ENCODE measurements at regions of chr9 and their contacts with region 1.

Region 1: GRCh38 chr9:121322037-121322775 is 47.8 kb downstream of the STOM start:
- DNase-seq: no peak
- H3K4me3 ChIP-seq: no peak overlapping the region
- H3K4me3 Mint-ChIP-seq: peak overlapping the region in 1 of 8 donors; percentile 24
- H3K27ac ChIP-seq: no peak overlapping the region
- H3K27ac Mint-ChIP-seq: peak overlapping the region in 1 of 7 donors; percentile 47
- H3K4me1 ChIP-seq: peaks cover 24% of the 10 kb centered on the region
- H3K4me1 Mint-ChIP-seq: peaks cover 14 to 29% (median 20%) of the 10 kb centered on the region in 4 donors
- H3K27me3 ChIP-seq: no peaks in the 10 kb centered on the region
- H3K27me3 Mint-ChIP-seq: no peaks in the 10 kb centered on the region

Region 2: GRCh38 chr9:121133149-121133816 is 188.9 kb before region 1 on chr9:
- CTCF ChIA-PET with region 1: no interaction called
- POLR2A ChIA-PET with region 1: no interaction called
- intact Hi-C with region 1: no loop called
- DNase-seq: peak; percentile 76 to 91 (median 81)
- H3K4me3 ChIP-seq: peak overlapping the region; percentile 21 to 48
- H3K4me3 Mint-ChIP-seq: peak overlapping the region; percentile 68 to 91 (median 77)
- H3K27ac ChIP-seq: peak overlapping the region; percentile 44
- H3K27ac Mint-ChIP-seq: peak overlapping the region; percentile 77 to 96 (median 87)
- H3K4me1 ChIP-seq: peaks cover 45% of the 10 kb centered on the region
- H3K4me1 Mint-ChIP-seq: peaks cover 52 to 79% (median 65%) of the 10 kb centered on the region in 4 donors
- H3K27me3 ChIP-seq: no peaks in the 10 kb centered on the region
- H3K27me3 Mint-ChIP-seq: no peaks in the 10 kb centered on the region

Region 3: GRCh38 chr9:121278535-121279261 is 43.5 kb before region 1 on chr9:
- CTCF ChIA-PET with region 1: interaction called, 11 read pairs
- POLR2A ChIA-PET with region 1: no interaction called
- intact Hi-C with region 1: no loop called
- DNase-seq: peak in 4 of 5 donors; percentile 21 to 35 (median 32)
- H3K4me3 ChIP-seq: no peak overlapping the region
- H3K4me3 Mint-ChIP-seq: no peak overlapping the region
- H3K27ac ChIP-seq: no peak overlapping the region
- H3K27ac Mint-ChIP-seq: no peak overlapping the region
- H3K4me1 ChIP-seq: no peaks in the 10 kb centered on the region
- H3K4me1 Mint-ChIP-seq: peaks cover 1 to 5% (median 4%) of the 10 kb centered on the region in 4 donors
- H3K27me3 ChIP-seq: no peaks in the 10 kb centered on the region
- H3K27me3 Mint-ChIP-seq: no peaks in the 10 kb centered on the region

Region 4: GRCh38 chr9:121350993-121351561 is 28.9 kb after region 1 on chr9:
- CTCF ChIA-PET with region 1: interaction called, 61 read pairs
- POLR2A ChIA-PET with region 1: interaction called, 8 read pairs
- intact Hi-C with region 1: loop called (anchors 2 kb)
- DNase-seq: no peak
- H3K4me3 ChIP-seq: no peak overlapping the region
- H3K4me3 Mint-ChIP-seq: no peak overlapping the region
- H3K27ac ChIP-seq: no peak overlapping the region
- H3K27ac Mint-ChIP-seq: peak overlapping the region in 1 of 7 donors; percentile 18
- H3K4me1 ChIP-seq: peaks cover 55% of the 10 kb centered on the region
- H3K4me1 Mint-ChIP-seq: peaks cover 27 to 54% (median 41%) of the 10 kb centered on the region in 4 donors
- H3K27me3 ChIP-seq: no peaks in the 10 kb centered on the region
- H3K27me3 Mint-ChIP-seq: no peaks in the 10 kb centered on the region

Region 5: DNA sequence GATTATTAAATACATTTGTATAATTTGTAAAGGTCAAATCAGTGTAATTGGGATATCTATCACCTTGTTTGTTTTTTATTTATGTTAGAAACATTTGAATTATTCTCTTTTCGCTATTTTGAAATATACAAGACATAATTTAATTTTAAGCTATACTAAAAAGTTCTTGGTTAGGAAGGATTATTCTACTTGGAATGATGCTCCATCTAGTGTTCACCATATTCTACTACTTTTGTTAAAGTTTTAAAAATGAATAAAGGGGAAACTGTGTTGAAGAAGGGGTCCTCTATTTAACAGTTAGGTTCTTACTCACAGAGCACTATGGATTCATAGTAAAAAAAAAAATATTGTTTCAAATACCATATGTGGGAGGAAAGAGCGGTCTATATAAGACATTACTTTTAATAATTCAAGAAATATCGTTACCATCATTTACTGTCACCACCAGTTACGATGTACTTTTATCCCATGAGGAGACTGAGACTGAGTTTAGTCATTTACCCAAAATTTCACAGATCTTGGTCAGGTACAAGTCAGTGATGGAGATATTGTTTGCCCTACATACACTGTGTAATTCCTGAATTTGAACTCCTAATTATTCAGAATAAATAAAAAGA is 54.1 kb after region 1 on chr9:
- CTCF ChIA-PET with region 1: interaction called, 272 read pairs
- POLR2A ChIA-PET with region 1: interaction called, 15 read pairs
- intact Hi-C with region 1: loop called (anchors 1 kb)
- DNase-seq: peak in 3 of 5 donors; percentile 24 to 30 (median 29)
- H3K4me3 ChIP-seq: no peak overlapping the region
- H3K4me3 Mint-ChIP-seq: no peak overlapping the region
- H3K27ac ChIP-seq: no peak overlapping the region
- H3K27ac Mint-ChIP-seq: no peak overlapping the region
- H3K4me1 ChIP-seq: peaks cover 3% of the 10 kb centered on the region
- H3K4me1 Mint-ChIP-seq: peaks cover 9 to 21% (median 10%) of the 10 kb centered on the region in 4 donors
- H3K27me3 ChIP-seq: no peaks in the 10 kb centered on the region
- H3K27me3 Mint-ChIP-seq: no peaks in the 10 kb centered on the region

Region 6: DNA sequence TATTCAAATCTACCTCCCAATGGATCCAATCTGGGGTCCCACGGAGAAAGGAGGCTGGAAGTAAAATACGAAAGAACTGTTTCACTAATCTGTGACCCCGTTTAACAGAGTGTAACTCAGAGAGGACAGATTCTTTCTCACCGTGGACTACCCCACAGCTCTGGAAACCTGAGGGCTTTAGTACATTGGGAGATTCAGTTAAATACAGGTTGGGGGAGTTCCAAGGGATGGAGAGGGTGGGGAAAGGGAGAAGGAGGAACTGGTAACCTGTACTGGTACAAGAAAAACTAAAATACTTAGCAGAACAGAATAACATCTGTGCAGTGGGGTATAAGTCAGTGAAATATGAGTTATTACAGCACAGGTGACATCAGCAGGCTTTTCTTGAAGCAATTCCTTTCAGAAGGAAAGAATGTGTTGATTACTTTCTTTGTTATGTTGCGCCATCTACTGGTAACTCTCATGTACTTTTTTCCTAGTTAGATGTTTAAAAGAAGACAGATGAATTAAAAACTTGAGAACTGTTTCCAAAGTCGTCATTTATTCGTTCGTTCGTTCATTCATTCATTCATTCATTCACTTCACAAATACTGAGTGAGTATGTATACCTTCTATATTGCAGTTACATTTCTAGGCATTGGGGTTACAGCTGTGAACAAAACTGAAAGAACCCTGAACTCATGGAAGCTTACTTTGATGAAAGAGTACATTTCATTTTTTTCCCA is 77.8 kb after region 1 on chr9:
- CTCF ChIA-PET with region 1: interaction called, 330 read pairs
- POLR2A ChIA-PET with region 1: interaction called, 11 read pairs
- intact Hi-C with region 1: loop called (anchors 1 kb)
- DNase-seq: peak in 4 of 5 donors; percentile 52 to 62 (median 60)
- H3K4me3 ChIP-seq: no peak overlapping the region
- H3K4me3 Mint-ChIP-seq: no peak overlapping the region
- H3K27ac ChIP-seq: no peak overlapping the region
- H3K27ac Mint-ChIP-seq: no peak overlapping the region
- H3K4me1 ChIP-seq: no peaks in the 10 kb centered on the region
- H3K4me1 Mint-ChIP-seq: peaks cover 0 to 2% (median 0%) of the 10 kb centered on the region in 4 donors
- H3K27me3 ChIP-seq: no peaks in the 10 kb centered on the region
- H3K27me3 Mint-ChIP-seq: peaks cover 0 to 2% of the 10 kb centered on the region in 2 donors

Region 7: GRCh38 chr9:121439711-121440664 is 117.8 kb after region 1 on chr9:
- CTCF ChIA-PET with region 1: no interaction called
- POLR2A ChIA-PET with region 1: no interaction called
- intact Hi-C with region 1: no loop called
- DNase-seq: no peak
- H3K4me3 ChIP-seq: no peak overlapping the region
- H3K4me3 Mint-ChIP-seq: no peak overlapping the region
- H3K27ac ChIP-seq: no peak overlapping the region
- H3K27ac Mint-ChIP-seq: no peak overlapping the region
- H3K4me1 ChIP-seq: no peaks in the 10 kb centered on the region
- H3K4me1 Mint-ChIP-seq: no peaks in the 10 kb centered on the region
- H3K27me3 ChIP-seq: no peaks in the 10 kb centered on the region
- H3K27me3 Mint-ChIP-seq: peaks cover 10 to 17% of the 10 kb centered on the region in 2 donors